Kidney (tissue), 22 donors: ENCODE measurements at regions of chr14 and their contacts with region 1.

Region 1: DNA sequence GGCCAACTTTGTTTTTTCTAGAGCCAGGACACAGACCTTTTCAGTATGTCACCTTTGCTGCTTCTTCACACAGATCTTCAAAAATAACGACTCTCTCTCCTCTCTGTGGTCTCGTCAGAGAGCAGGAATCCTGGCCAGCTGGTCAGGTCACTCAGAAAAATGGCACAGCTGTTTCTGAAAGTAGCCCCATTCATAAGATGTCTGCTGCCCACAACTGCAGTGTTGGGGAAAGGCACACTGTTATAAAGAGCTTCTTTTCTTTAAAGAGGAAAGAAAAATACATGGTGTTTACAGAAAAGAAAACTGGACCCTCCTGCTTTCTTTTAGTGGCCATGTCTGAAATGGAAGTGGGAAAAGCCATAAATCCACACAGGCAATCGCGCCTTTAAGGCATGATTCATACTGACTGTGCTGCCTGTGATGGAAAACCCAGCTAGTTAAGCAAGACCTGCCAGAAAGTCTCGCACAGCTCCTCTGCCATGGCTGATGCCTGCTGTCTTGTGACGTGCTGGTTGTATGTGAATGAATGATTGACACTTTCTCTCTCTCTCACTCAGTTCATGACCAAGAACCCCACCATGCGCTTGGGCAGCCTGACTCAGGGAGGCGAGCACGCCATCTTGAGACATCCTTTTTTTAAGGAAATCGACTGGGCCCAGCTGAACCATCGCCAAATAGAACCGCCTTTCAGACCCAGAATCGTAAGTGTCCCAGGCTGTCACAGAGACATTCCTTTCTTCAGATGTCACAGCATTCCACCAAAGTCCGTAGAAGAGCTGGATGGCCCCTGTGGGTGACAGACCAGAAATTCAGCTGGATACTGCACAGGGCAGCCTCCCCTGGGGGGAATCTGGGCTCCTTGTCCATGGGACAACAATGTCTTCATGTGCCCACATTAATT is 147.9 kb upstream of the HIF1A start:
- DNase-seq: no peak
- H3K4me3 ChIP-seq: no peak overlapping the region
- H3K27ac ChIP-seq: no peak overlapping the region
- H3K4me1 ChIP-seq: peaks cover 0 to 17% (median 17%) of the 10 kb centered on the region in 3 donors
- H3K27me3 ChIP-seq: no peaks in the 10 kb centered on the region
- CTCF ChIP-seq: no peak

Region 2: GRCh38 chr14:61489932-61490331 is 57.5 kb before region 1 on chr14:
- intact Hi-C with region 1: loop called (anchors 10 kb)
- DNase-seq: no peak
- H3K4me3 ChIP-seq: no peak overlapping the region
- H3K27ac ChIP-seq: no peak overlapping the region
- H3K4me1 ChIP-seq: peaks cover 0 to 17% (median 9%) of the 10 kb centered on the region in 3 donors
- H3K27me3 ChIP-seq: no peaks in the 10 kb centered on the region
- CTCF ChIP-seq: no peak

Region 3: DNA sequence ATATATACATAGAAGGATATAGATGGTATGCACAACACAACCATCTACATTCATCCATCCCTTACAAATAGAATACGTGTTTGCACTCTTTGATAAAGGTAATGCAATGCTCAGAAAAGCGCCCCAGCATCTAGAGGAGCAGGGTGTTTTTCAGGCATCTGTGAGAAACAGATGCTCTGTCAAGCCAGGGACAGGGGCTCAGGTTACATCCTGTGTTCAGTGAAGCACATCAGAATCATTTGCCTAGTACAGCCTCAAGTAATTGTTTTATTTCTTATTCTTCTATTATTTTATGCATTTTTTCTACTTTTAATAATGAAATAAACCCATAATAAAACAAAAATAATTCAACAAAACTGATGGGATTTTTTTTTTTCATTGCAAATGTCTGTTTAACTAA is 97.4 kb after region 1 on chr14:
- intact Hi-C with region 1: no loop called
- DNase-seq: peak in 4 of 5 donors; percentile 51 to 85 (median 64)
- H3K4me3 ChIP-seq: no peak overlapping the region
- H3K27ac ChIP-seq: no peak overlapping the region
- H3K4me1 ChIP-seq: peaks cover 0 to 3% (median 0%) of the 10 kb centered on the region in 3 donors
- H3K27me3 ChIP-seq: no peaks in the 10 kb centered on the region
- CTCF ChIP-seq: no peak